K562 (cell line): ENCODE measurements at regions of chr9 and their contacts with region 1.

Region 1: DNA sequence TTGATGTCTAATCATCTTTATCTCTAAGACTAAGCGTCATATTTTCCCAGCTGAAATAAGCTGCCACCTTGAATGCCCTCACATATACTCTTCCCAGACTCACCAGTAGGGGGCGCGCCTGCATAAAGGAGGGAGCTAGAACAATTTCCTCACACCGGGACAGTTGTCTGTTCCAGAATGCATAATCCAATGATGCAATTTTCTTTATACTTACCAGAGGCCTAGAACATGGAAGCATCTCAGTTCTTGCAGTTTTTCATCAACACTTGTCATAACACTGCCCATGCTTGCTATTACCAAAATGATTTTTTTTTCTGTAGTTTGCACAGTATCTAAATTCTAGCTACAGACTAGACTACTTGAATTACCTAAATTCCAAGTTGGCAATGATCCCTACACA is 203.9 kb downstream of the FRMD3 start:
- DNase-seq: peak; percentile 46 to 65 (median 54)
- ATAC-seq: peak; percentile 92
- H3K4me3 ChIP-seq: no peak overlapping the region
- H3K27ac ChIP-seq: no peak overlapping the region
- H3K4me1 ChIP-seq: no peaks in the 10 kb centered on the region
- H3K27me3 ChIP-seq: no peaks in the 10 kb centered on the region
- CTCF ChIP-seq: peak; percentile 70 to 82 (median 71)
- EP300 ChIP-seq: no peak
- POLR2A ChIP-seq: no peak
- RAD21 ChIP-seq: peak; percentile 56 to 79

Region 2: GRCh38 chr9:83199243-83199642 is 135.1 kb before region 1 on chr9:
- CTCF ChIA-PET with region 1: no interaction called
- POLR2A ChIA-PET with region 1: no interaction called
- in situ Hi-C with region 1: no loop called
- intact Hi-C with region 1: loop called (anchors 5 kb)
- DNase-seq: peak in 1 of 4 experiments; percentile 5
- ATAC-seq: peak; percentile 70; the same call in 2 of the 3 replicates
- H3K4me3 ChIP-seq: no peak overlapping the region
- H3K27ac ChIP-seq: no peak overlapping the region
- H3K4me1 ChIP-seq: no peaks in the 10 kb centered on the region
- H3K27me3 ChIP-seq: no peaks in the 10 kb centered on the region
- CTCF ChIP-seq: peak; percentile 17 to 28 (median 28); a peak in 3 of 6 replicates
- EP300 ChIP-seq: no peak
- POLR2A ChIP-seq: no peak
- RAD21 ChIP-seq: peak; percentile 25 to 44; a peak in 2 of 4 replicates

Region 3: DNA sequence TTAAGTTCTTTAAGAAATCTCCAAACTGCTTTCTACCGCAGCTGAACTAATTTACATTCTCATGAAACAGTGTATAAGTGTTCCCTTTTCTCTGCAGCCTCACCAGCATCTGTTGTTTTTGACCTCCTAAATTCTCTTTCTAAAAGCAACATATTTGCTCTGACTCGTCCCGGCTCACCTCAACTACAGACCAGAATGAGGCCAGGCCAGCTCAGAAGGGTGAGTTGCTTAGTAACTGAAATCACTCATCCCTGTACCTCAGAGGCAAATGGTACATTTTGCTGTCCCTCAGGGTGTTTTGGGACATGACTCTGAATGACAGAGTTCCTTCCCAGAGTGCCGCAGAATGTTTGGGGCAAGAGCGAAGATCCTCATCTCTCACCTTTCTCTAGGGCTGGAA is 76.4 kb after region 1 on chr9:
- CTCF ChIA-PET with region 1: no interaction called
- POLR2A ChIA-PET with region 1: no interaction called
- in situ Hi-C with region 1: no loop called
- intact Hi-C with region 1: no loop called
- DNase-seq: no peak
- ATAC-seq: no peak
- H3K4me3 ChIP-seq: no peak overlapping the region
- H3K27ac ChIP-seq: no peak overlapping the region
- H3K4me1 ChIP-seq: no peaks in the 10 kb centered on the region
- H3K27me3 ChIP-seq: no peaks in the 10 kb centered on the region
- CTCF ChIP-seq: no peak
- EP300 ChIP-seq: no peak
- POLR2A ChIP-seq: no peak
- RAD21 ChIP-seq: no peak

Region 4: GRCh38 chr9:83544002-83544698 is 209.8 kb after region 1 on chr9:
- CTCF ChIA-PET with region 1: no interaction called
- POLR2A ChIA-PET with region 1: no interaction called
- in situ Hi-C with region 1: no loop called
- intact Hi-C with region 1: loop called (anchors 5 kb)
- DNase-seq: peak; percentile 20 to 34 (median 26)
- ATAC-seq: peak; percentile 94
- H3K4me3 ChIP-seq: no peak overlapping the region
- H3K27ac ChIP-seq: no peak overlapping the region
- H3K4me1 ChIP-seq: no peaks in the 10 kb centered on the region
- H3K27me3 ChIP-seq: no peaks in the 10 kb centered on the region
- CTCF ChIP-seq: peak; percentile 45 to 58 (median 49)
- EP300 ChIP-seq: no peak
- POLR2A ChIP-seq: no peak
- RAD21 ChIP-seq: peak in 1 of 2 experiments; percentile 53; a peak in 2 of 4 replicates

Region 5: GRCh38 chr9:83596896-83597504 is 262.7 kb after region 1 on chr9:
- CTCF ChIA-PET with region 1: interaction called, 3 read pairs
- POLR2A ChIA-PET with region 1: no interaction called
- in situ Hi-C with region 1: no loop called
- intact Hi-C with region 1: loop called (anchors 1 kb)
- DNase-seq: peak; percentile 47 to 60 (median 50)
- ATAC-seq: peak; percentile 90
- H3K4me3 ChIP-seq: no peak overlapping the region
- H3K27ac ChIP-seq: no peak overlapping the region
- H3K4me1 ChIP-seq: no peaks in the 10 kb centered on the region
- H3K27me3 ChIP-seq: no peaks in the 10 kb centered on the region
- CTCF ChIP-seq: peak; percentile 47 to 70 (median 61)
- EP300 ChIP-seq: no peak
- POLR2A ChIP-seq: no peak
- RAD21 ChIP-seq: peak; percentile 41 to 56; a peak in 3 of 4 replicates

Region 6: DNA sequence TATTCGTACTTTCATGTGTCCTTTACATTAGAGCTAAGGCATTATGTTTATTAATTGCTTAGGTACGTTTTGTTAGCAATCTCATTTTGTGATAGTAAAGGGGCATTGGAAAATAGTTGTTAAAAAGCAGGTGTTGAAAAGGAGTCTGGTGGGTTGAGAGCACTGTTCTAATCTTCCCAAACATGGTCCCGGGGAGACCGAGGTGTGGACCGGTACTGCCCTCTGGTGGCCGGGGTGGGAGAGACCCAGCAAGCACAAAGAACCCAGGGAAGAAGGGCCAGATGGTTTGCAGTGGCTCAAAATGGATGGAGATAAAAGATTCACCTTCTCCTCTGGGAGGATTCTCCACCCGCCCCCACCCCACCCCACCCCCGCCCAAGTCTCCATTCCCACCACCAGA is 314.8 kb after region 1 on chr9:
- CTCF ChIA-PET with region 1: interaction called, 3 read pairs
- POLR2A ChIA-PET with region 1: no interaction called
- in situ Hi-C with region 1: no loop called
- intact Hi-C with region 1: loop called (anchors 1 kb)
- DNase-seq: peak; percentile 71 to 76 (median 72)
- ATAC-seq: peak; percentile 95
- H3K4me3 ChIP-seq: no peak overlapping the region
- H3K27ac ChIP-seq: no peak overlapping the region
- H3K4me1 ChIP-seq: peaks cover 0 to 4% of the 10 kb centered on the region in 2 experiments; a peak in 2 of 5 replicates
- H3K27me3 ChIP-seq: no peaks in the 10 kb centered on the region
- CTCF ChIP-seq: peak; percentile 70 to 76 (median 72)
- EP300 ChIP-seq: no peak
- POLR2A ChIP-seq: no peak
- RAD21 ChIP-seq: peak; percentile 62 to 64

Region 7: DNA sequence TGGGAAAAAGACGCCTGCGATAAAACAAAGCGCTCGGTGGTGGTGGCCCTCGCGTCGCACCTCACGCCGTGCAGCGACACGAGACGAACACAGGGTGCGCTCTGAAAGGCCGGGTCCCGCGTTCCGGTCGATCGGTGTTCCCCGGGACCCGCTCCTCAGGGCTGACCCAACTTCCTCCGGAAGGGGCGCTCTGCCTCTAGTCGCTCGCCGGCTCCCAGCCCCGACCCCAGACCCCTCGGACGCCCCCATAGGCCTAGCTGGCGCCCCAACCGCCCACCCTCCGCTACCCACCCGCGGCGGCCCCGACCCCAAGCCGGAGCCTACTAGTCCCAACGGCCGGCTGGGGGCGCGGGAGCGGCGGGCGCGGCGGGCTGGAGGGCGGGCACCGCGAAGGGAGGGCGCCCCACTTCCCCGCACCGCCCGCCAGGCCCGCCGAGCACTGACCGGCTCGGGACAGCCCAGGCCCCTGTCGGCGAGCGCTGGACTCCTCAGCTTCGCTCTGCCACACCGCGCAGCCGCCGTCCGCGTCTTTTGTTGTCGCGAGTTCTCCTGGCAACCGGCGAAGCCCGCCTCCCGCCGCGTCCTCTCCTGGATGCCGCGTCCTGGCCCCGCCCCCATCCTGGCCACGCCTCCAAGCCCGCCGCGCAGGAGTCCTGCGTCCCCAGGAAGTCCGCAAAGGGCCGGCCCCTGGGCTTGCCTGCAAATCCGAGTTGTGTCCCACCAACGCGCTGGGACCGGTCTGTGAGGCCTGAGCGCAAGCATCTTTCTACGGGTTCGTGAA is 586.8 kb after region 1 on chr9 and contains the start of gene KIF27:
- CTCF ChIA-PET with region 1: no interaction called
- POLR2A ChIA-PET with region 1: no interaction called
- in situ Hi-C with region 1: loop called (anchors 25 kb)
- intact Hi-C with region 1: loop called (anchors 10 kb)
- DNase-seq: peak; percentile 89 to 95 (median 90)
- ATAC-seq: peak; percentile 97
- H3K4me3 ChIP-seq: peak within 1 kb of the TSS; percentile 61
- H3K27ac ChIP-seq: peak within 1 kb of the TSS; percentile 81; the same call in 2 of the 3 replicates
- H3K4me1 ChIP-seq: peaks cover 0 to 6% of the 10 kb centered on the region in 2 experiments; a peak in 3 of 5 replicates
- H3K27me3 ChIP-seq: no peaks in the 10 kb centered on the region
- CTCF ChIP-seq: peak; percentile 9 to 62 (median 31); a peak in 3 of 6 replicates
- EP300 ChIP-seq: no peak
- POLR2A ChIP-seq: peak; percentile 65
- RAD21 ChIP-seq: no peak
- polyA plus RNA-seq, gene KIF27: 0.32 to 0.50 TPM